ENCODE measurements at regions of chr16 and their contacts with region 1.

Region 1: GRCh38 chr16:30437486-30438046 is 7.7 kb upstream of the DCTPP1 start:
- DNase-seq: peak in 1 of 2 donors; percentile 17
- H3K4me3 ChIP-seq: no peak overlapping the region
- H3K27ac ChIP-seq: no peak overlapping the region
- H3K4me1 ChIP-seq: no peaks in the 10 kb centered on the region
- H3K27me3 ChIP-seq: no peaks in the 10 kb centered on the region
- CTCF ChIP-seq: no peak
- POLR2A ChIP-seq: no peak

Region 2: DNA sequence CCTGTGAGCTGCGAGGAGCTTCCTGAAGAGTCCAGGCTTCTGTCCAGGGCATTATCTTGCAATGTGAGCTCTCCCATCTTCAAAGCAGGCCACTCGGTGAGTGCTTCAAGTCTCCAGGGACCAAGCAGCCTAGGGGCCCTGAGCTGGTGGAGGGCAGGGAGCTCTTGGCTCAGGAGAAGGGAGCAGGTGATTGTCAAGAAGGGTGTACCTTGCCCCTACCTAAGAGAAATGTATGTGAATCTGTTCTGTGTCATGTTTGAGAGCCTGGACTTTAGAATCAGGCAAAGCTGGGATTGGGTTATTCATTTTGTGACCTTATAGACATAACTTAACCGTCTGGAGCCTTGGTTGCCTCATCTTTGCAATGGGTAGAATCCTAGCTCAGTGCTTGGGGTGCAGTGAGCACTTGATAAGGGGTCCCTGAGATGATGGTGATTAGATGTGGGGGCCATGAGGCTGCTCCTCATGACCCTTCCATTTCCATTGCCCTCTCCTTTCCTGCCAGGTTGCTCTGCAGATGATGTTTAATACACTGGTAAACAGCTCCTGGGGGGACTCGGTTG is 72.9 kb after region 1 on chr16:
- intact Hi-C with region 1: loop called (anchors 5 kb)
- DNase-seq: no peak
- H3K4me3 ChIP-seq: no peak overlapping the region
- H3K27ac ChIP-seq: no peak overlapping the region
- H3K4me1 ChIP-seq: no peaks in the 10 kb centered on the region
- H3K27me3 ChIP-seq: no peaks in the 10 kb centered on the region
- CTCF ChIP-seq: no peak
- POLR2A ChIP-seq: no peak

Region 3: DNA sequence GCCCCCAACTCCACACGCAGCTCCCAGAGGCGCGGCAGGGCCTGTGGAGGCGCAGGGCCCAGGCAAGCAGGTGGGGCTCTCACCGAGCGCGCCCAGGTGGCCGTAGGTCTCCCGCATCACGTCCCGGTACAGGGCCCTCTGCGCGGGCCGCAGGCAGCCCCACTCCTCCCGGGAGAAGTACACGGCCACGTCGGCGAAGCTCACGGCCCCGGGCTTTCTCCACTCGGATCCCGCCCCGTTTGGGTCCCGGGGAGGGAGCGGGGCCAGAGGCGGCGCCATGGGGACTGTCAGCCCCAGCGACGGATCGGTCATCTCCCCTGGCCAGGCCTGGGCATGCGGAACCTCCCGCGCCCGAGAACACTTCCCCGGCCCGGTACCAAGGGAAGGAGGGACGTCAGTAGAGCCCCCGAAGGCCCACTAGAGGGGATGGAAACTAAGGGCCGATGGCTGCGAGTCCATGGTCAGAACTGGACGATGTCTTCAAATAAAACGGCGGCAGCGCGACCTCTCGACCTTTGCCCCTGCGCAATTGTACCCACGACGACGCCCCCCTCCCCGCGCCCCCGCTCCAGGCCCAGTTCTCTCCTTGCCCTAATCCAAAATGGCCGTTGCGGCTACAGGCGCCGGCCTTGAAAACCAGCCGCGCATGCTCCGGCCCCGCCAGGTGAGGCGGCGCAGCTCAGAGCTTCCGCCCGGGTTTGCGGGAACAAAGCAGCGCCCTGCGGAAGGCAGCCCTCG is 97.0 kb after region 1 on chr16 and contains the start of gene ZNF747:
- intact Hi-C with region 1: no loop called
- DNase-seq: peak; percentile 95
- H3K4me3 ChIP-seq: peak within 1 kb of the TSS; percentile 59 to 81 (median 73)
- H3K27ac ChIP-seq: peak within 1 kb of the TSS; percentile 77 to 92 (median 82)
- H3K4me1 ChIP-seq: peaks cover 16 to 17% of the 10 kb centered on the region in 2 donors
- H3K27me3 ChIP-seq: no peaks in the 10 kb centered on the region
- CTCF ChIP-seq: no peak
- POLR2A ChIP-seq: peak; percentile 32 to 78
- total RNA-seq, gene ZNF747: 13.6 to 30.7 (median 21.8) TPM

Region 4: GRCh38 chr16:30557957-30558788 is 120.6 kb after region 1 on chr16 and contains the start of gene ZNF764:
- intact Hi-C with region 1: no loop called
- DNase-seq: peak; percentile 99
- H3K4me3 ChIP-seq: peak within 1 kb of the TSS; percentile 88 to 99 (median 95)
- H3K27ac ChIP-seq: peak within 1 kb of the TSS; percentile 66 to 92 (median 89)
- H3K4me1 ChIP-seq: peaks cover 11 to 16% of the 10 kb centered on the region in 2 donors
- H3K27me3 ChIP-seq: no peaks in the 10 kb centered on the region
- CTCF ChIP-seq: peak in 1 of 6 experiments; percentile 6
- POLR2A ChIP-seq: peak in 1 of 2 donors; percentile 59
- total RNA-seq, gene ZNF764: 9.3 to 15.4 (median 11.8) TPM

Measured in thyroid gland (tissue), 4 donors.